BJ (cell line): ENCODE measurements at regions of chr2 and their contacts with region 1.

Region 1: GRCh38 chr2:162166174-162166573 is 14.1 kb upstream of the GCG start:
- DNase-seq: no peak
- H3K4me3 ChIP-seq: no peak overlapping the region
- H3K27me3 ChIP-seq: no peaks in the 10 kb centered on the region
- CTCF ChIP-seq: no peak

Region 2: GRCh38 chr2:162153608-162154224 is 12.5 kb before region 1 on chr2:
- CTCF ChIA-PET with region 1: interaction called, 10 read pairs
- POLR2A ChIA-PET with region 1: no interaction called
- DNase-seq: no peak
- H3K4me3 ChIP-seq: no peak overlapping the region
- H3K27me3 ChIP-seq: peaks cover 2% of the 10 kb centered on the region; the same call in 1 of the 2 replicates
- CTCF ChIP-seq: peak; percentile 64